ENCODE measurements at regions of chr1 and their contacts with region 1.

Region 1: GRCh38 chr1:68168545-68169171 is 63.7 kb downstream of the WLS start:
- DNase-seq: no peak
- H3K4me3 ChIP-seq: no peak overlapping the region
- H3K27ac ChIP-seq: no peak overlapping the region
- H3K4me1 ChIP-seq: peaks cover 8% of the 10 kb centered on the region
- H3K27me3 ChIP-seq: no peaks in the 10 kb centered on the region
- CTCF ChIP-seq: no peak

Region 2: DNA sequence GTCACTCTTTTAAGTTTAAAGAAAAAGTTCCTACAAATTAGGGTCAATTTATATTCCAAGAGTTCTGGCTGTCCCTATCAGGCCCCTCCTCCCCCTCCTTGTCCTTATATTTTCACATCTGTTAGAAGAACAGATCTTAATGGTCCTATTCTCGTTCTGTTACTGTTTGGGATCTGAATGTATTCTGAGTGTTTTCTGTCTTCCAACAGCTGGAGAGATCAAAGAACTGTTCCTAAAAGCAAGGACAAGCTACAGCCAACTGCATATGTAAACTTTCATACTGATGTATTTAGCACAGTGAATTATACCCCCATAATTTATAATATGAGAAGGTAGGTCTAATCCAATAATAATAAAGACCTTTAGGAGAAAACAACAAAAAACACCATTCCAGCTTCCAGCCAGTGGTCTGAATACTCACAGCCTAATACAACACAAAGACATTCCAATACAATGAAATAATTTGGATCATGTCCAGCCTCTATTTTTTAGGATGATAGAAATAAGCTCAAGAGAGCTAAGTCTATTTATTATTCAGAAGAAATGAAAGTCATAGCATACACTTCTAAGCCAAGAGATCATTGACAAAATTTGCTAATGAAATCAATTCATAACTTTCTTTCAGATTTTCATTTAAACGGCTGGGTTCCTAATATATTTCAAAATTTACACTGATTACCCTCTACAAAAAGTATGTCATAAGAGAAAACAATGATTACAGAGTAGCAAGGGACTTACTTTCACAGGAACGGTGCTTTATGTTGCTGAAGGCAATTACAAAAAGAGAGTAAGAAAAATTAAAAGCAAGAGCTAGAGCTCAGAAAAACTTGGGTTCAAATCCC is 38.4 kb after region 1 on chr1:
- CTCF ChIA-PET with region 1: no interaction called
- dilution Hi-C with region 1: no loop called
- in situ Hi-C with region 1: no loop called
- intact Hi-C with region 1: no loop called
- DNase-seq: no peak
- H3K4me3 ChIP-seq: no peak overlapping the region
- H3K27ac ChIP-seq: no peak overlapping the region
- H3K4me1 ChIP-seq: peaks cover 16% of the 10 kb centered on the region
- H3K27me3 ChIP-seq: no peaks in the 10 kb centered on the region
- CTCF ChIP-seq: no peak

Region 3: GRCh38 chr1:68269637-68270426 is 101.2 kb after region 1 on chr1:
- CTCF ChIA-PET with region 1: no interaction called
- dilution Hi-C with region 1: loop called (anchors 5 kb)
- in situ Hi-C with region 1: no loop called
- intact Hi-C with region 1: no loop called
- DNase-seq: peak; percentile 46
- H3K4me3 ChIP-seq: no peak overlapping the region
- H3K27ac ChIP-seq: no peak overlapping the region
- H3K4me1 ChIP-seq: peaks cover 8% of the 10 kb centered on the region
- H3K27me3 ChIP-seq: no peaks in the 10 kb centered on the region
- CTCF ChIP-seq: no peak